Upper lobe of right lung (tissue), 1 donor: ENCODE measurements at regions of chr17 and their contacts with region 1.

Region 1: GRCh38 chr17:77096570-77097214 is 44.1 kb upstream of the SEC14L1 start:
- DNase-seq: no peak
- ATAC-seq: peak; percentile 65
- H3K4me3 ChIP-seq: no peak overlapping the region
- H3K27ac ChIP-seq: peak overlapping the region; percentile 70
- H3K4me1 ChIP-seq: peaks cover 39% of the 10 kb centered on the region
- H3K27me3 ChIP-seq: no peaks in the 10 kb centered on the region
- CTCF ChIP-seq: peak; percentile 70

Region 2: GRCh38 chr17:77140166-77140878 is 43.6 kb after region 1 on chr17:
- intact Hi-C with region 1: loop called (anchors 10 kb)
- DNase-seq: peak; percentile 100
- ATAC-seq: peak; percentile 97
- H3K4me3 ChIP-seq: peak overlapping the region; percentile 75
- H3K27ac ChIP-seq: peak overlapping the region; percentile 91
- H3K4me1 ChIP-seq: peaks cover 34% of the 10 kb centered on the region
- H3K27me3 ChIP-seq: no peaks in the 10 kb centered on the region
- CTCF ChIP-seq: no peak

Region 3: GRCh38 chr17:77214743-77215142 is 118.1 kb after region 1 on chr17:
- intact Hi-C with region 1: loop called (anchors 10 kb)
- DNase-seq: no peak
- ATAC-seq: peak; percentile 73
- H3K4me3 ChIP-seq: no peak overlapping the region
- H3K27ac ChIP-seq: no peak overlapping the region
- H3K4me1 ChIP-seq: peaks cover 10% of the 10 kb centered on the region
- H3K27me3 ChIP-seq: no peaks in the 10 kb centered on the region
- CTCF ChIP-seq: peak; percentile 47